B cell (primary cell): ENCODE measurements at regions of chr17 and their contacts with region 1.

Region 1: DNA sequence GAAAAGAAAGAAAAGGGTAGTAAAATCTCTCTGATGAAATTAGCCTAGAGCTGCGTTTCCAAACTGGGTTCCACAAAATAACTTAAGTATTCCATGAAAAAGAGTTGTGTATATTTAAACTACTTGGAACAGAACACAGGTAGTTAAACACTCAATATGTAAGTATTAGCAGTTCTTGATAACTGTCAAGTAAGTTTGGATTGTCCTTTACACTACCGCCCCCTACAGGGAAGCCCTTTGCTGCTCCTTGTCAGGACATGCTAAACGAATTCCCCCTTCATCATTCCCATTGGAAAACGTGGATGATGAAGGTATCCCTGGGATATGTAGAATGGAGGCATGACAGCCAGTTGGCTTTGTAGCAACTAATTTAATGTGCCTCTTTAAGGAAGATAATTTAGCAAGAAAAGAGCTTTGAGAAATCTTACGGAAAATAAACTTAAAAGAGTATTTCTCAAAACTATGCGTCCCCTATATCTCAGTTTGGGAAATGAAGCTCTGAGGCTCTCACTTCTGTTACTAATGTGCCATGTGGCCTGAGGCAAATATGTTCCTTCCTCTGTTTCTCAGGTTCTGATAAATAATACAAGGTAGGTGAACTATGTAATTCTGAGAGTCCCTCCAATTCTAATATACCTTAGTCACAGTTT is 18.8 kb downstream of the NCBP3 start:
- DNase-seq: peak; percentile 80
- ATAC-seq: peak; percentile 62
- H3K4me3 ChIP-seq: no peak overlapping the region
- H3K4me3 Mint-ChIP-seq: no peak overlapping the region
- H3K27ac ChIP-seq: no peak overlapping the region
- H3K27ac Mint-ChIP-seq: no peak overlapping the region
- H3K4me1 ChIP-seq: no peaks in the 10 kb centered on the region
- H3K4me1 Mint-ChIP-seq: peaks cover 1% of the 10 kb centered on the region
- H3K27me3 ChIP-seq: no peaks in the 10 kb centered on the region
- H3K27me3 Mint-ChIP-seq: no peaks in the 10 kb centered on the region
- CTCF ChIP-seq: peak; percentile 95

Region 2: DNA sequence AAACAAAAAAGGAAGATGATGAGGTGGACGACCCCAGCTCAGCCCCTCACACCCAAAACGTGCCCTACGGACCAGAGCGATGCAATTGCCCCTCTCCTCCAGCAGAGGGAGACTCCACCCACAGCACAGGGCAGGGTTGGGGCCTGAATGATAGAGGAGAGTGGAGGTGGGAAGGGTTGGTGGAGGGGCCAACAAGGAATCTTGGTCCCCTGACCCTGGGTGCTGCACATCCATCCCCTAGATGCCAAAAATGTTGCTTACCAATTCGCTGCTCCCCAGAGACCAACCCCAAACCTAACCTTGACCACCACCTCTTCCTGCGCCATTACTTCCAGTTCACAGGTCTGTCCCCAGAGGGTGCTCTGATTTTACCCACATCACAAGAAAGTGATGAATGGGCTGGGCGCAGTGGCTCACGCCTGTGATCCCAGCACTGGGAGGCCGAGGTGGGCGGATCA is 144.2 kb before region 1 on chr17:
- CTCF ChIA-PET with region 1: interaction called, 57 read pairs
- POLR2A ChIA-PET with region 1: no interaction called
- intact Hi-C with region 1: loop called (anchors 2 kb)
- DNase-seq: peak; percentile 89
- ATAC-seq: peak; percentile 73
- H3K4me3 ChIP-seq: no peak overlapping the region
- H3K4me3 Mint-ChIP-seq: peak overlapping the region; percentile 24
- H3K27ac ChIP-seq: peak overlapping the region; percentile 36 to 56
- H3K27ac Mint-ChIP-seq: peak overlapping the region; percentile 89
- H3K4me1 ChIP-seq: peaks cover 19 to 50% of the 10 kb centered on the region in 2 donors
- H3K4me1 Mint-ChIP-seq: peaks cover 44% of the 10 kb centered on the region
- H3K27me3 ChIP-seq: no peaks in the 10 kb centered on the region
- H3K27me3 Mint-ChIP-seq: no peaks in the 10 kb centered on the region
- CTCF ChIP-seq: peak; percentile 98

Region 3: GRCh38 chr17:3754458-3755334 is 72.6 kb before region 1 on chr17:
- CTCF ChIA-PET with region 1: interaction called, 7 read pairs
- POLR2A ChIA-PET with region 1: interaction called, 10 read pairs
- intact Hi-C with region 1: no loop called
- DNase-seq: peak; percentile 89
- ATAC-seq: peak; percentile 93
- H3K4me3 ChIP-seq: peak overlapping the region in 4 of 5 experiments; percentile 28 to 57 (median 44)
- H3K4me3 Mint-ChIP-seq: peak overlapping the region; percentile 56
- H3K27ac ChIP-seq: peak overlapping the region in 1 of 2 donors; percentile 46
- H3K27ac Mint-ChIP-seq: peak overlapping the region; percentile 59
- H3K4me1 ChIP-seq: peaks cover 3 to 32% of the 10 kb centered on the region in 2 donors
- H3K4me1 Mint-ChIP-seq: peaks cover 22% of the 10 kb centered on the region
- H3K27me3 ChIP-seq: no peaks in the 10 kb centered on the region
- H3K27me3 Mint-ChIP-seq: no peaks in the 10 kb centered on the region
- CTCF ChIP-seq: no peak

Region 4: DNA sequence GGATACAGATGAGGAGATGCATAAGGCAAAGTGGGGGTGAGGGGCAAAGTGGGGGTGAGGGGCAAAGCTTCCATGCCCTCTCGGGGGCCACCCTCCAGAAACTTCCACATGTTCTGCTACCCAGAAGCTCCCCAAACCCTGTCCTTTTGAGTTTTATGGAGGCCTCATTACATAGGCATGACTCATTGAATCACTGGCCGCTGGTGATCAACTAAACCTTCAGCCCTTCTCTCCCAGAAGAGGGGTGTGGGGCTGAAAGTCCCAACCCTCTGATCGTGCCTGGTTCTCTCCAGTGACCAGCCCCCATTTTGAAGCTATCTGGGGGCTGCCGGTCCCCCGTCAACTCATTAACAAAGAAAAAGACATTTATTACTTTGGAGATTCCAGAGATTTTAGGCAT is 53.7 kb before region 1 on chr17:
- CTCF ChIA-PET with region 1: interaction called, 25 read pairs
- POLR2A ChIA-PET with region 1: interaction called, 7 read pairs
- intact Hi-C with region 1: no loop called
- DNase-seq: no peak
- ATAC-seq: no peak
- H3K4me3 ChIP-seq: no peak overlapping the region
- H3K4me3 Mint-ChIP-seq: no peak overlapping the region
- H3K27ac ChIP-seq: no peak overlapping the region
- H3K27ac Mint-ChIP-seq: no peak overlapping the region
- H3K4me1 ChIP-seq: peaks cover 9 to 11% of the 10 kb centered on the region in 2 donors
- H3K4me1 Mint-ChIP-seq: peaks cover 18% of the 10 kb centered on the region
- H3K27me3 ChIP-seq: no peaks in the 10 kb centered on the region
- H3K27me3 Mint-ChIP-seq: no peaks in the 10 kb centered on the region
- CTCF ChIP-seq: no peak

Region 5: GRCh38 chr17:3812771-3813170 is 14.5 kb before region 1 on chr17:
- CTCF ChIA-PET with region 1: interaction called, 28 read pairs
- POLR2A ChIA-PET with region 1: no interaction called
- intact Hi-C with region 1: no loop called
- DNase-seq: no peak
- ATAC-seq: no peak
- H3K4me3 ChIP-seq: no peak overlapping the region
- H3K4me3 Mint-ChIP-seq: no peak overlapping the region
- H3K27ac ChIP-seq: no peak overlapping the region
- H3K27ac Mint-ChIP-seq: no peak overlapping the region
- H3K4me1 ChIP-seq: peaks cover 13 to 33% of the 10 kb centered on the region in 2 donors
- H3K4me1 Mint-ChIP-seq: peaks cover 43% of the 10 kb centered on the region
- H3K27me3 ChIP-seq: no peaks in the 10 kb centered on the region
- H3K27me3 Mint-ChIP-seq: no peaks in the 10 kb centered on the region
- CTCF ChIP-seq: no peak